Endothelial cell of umbilical vein (primary cell): ENCODE measurements at regions of chr2 and their contacts with region 1.

Region 1: GRCh38 chr2:134118279-134119116 is 135.4 kb upstream of the MGAT5 start:
- DNase-seq: peak; percentile 92
- H3K4me3 ChIP-seq: no peak overlapping the region
- H3K27ac ChIP-seq: peak overlapping the region; percentile 43
- H3K4me1 ChIP-seq: peaks cover 25% of the 10 kb centered on the region
- H3K27me3 ChIP-seq: peaks cover 0 to 3% of the 10 kb centered on the region in 2 experiments
- CTCF ChIP-seq: peak; percentile 64 to 69
- POLR2A ChIP-seq: no peak

Region 2: DNA sequence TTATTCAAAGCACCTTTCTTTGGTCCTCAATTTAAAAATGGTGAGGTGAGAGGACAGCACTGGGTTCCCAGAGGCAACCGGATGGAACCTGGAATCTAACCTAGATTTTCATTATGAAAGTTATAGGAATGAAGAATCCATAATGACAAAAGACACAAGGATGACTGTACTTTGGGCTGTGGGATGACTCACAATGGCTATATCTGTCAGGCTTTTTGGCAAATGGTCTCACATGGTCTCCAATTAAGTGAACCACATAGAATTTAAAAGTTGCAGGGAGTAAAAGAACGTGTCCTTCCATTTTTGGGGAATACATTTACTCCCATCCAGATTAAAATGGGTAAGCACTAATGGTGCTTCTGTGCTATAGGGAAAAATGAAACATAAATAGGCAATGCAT is 1416.7 kb before region 1 on chr2:
- CTCF ChIA-PET with region 1: no interaction called
- POLR2A ChIA-PET with region 1: no interaction called
- dilution Hi-C with region 1: no loop called
- intact Hi-C with region 1: no loop called
- DNase-seq: no peak
- H3K4me3 ChIP-seq: no peak overlapping the region
- H3K27ac ChIP-seq: no peak overlapping the region
- H3K4me1 ChIP-seq: no peaks in the 10 kb centered on the region
- H3K27me3 ChIP-seq: no peaks in the 10 kb centered on the region
- CTCF ChIP-seq: no peak
- POLR2A ChIP-seq: no peak

Region 3: DNA sequence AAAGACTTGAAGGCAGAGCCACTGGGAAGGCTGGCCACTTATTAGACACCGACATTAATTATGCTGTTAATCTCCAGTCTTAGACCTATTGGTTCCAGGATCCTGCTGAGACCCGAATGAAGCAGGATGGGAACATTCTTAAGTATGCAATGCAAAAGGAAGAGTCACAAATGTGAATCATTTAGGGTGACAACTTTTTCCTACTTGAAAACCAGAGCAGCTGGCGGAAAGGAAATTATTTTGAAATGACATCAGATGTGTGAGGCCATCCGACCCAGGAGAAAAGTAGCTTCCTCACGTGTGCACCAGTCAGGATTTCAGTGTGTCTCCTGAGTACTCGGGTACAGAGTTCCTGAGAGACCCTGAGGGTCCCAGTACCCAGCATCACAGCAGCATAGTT is 327.3 kb before region 1 on chr2:
- CTCF ChIA-PET with region 1: no interaction called
- POLR2A ChIA-PET with region 1: no interaction called
- dilution Hi-C with region 1: no loop called
- intact Hi-C with region 1: no loop called
- DNase-seq: peak; percentile 46
- H3K4me3 ChIP-seq: no peak overlapping the region
- H3K27ac ChIP-seq: peak overlapping the region; percentile 62
- H3K4me1 ChIP-seq: peaks cover 13% of the 10 kb centered on the region
- H3K27me3 ChIP-seq: no peaks in the 10 kb centered on the region
- CTCF ChIP-seq: no peak
- POLR2A ChIP-seq: no peak

Region 4: GRCh38 chr2:134020608-134021007 is 97.9 kb before region 1 on chr2:
- CTCF ChIA-PET with region 1: no interaction called
- POLR2A ChIA-PET with region 1: no interaction called
- dilution Hi-C with region 1: no loop called
- intact Hi-C with region 1: no loop called
- DNase-seq: no peak
- H3K4me3 ChIP-seq: no peak overlapping the region
- H3K27ac ChIP-seq: no peak overlapping the region
- H3K4me1 ChIP-seq: no peaks in the 10 kb centered on the region
- H3K27me3 ChIP-seq: peaks cover 0 to 1% of the 10 kb centered on the region in 2 experiments
- CTCF ChIP-seq: no peak
- POLR2A ChIP-seq: no peak

Region 5: DNA sequence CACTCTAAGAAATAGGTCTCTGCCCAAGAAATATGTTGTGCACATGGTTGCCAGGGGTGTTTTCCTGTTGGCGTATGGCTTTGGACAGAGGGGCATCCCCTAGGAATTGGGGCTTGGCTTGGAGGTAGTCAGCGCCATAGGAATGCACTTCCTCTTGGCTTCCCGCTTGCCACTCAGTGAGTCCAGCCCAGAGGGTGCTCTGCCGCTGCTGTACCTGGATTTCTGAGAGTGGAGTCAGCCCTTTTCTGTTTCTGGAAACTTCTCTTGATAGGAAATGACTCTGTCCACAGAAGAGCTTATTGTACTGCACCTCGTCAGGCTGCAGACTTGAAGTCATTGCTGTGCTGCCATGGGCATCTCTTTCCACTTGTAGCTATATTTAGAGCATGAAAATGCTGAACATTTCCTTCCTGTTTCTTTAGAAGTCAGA is 18.7 kb after region 1 on chr2:
- CTCF ChIA-PET with region 1: interaction called, 12 read pairs
- POLR2A ChIA-PET with region 1: interaction called, 6 read pairs
- dilution Hi-C with region 1: no loop called
- intact Hi-C with region 1: loop called (anchors 1 kb)
- DNase-seq: peak; percentile 84
- H3K4me3 ChIP-seq: peak overlapping the region in 1 of 3 experiments; percentile 34
- H3K27ac ChIP-seq: peak overlapping the region; percentile 85
- H3K4me1 ChIP-seq: peaks cover 26% of the 10 kb centered on the region
- H3K27me3 ChIP-seq: no peaks in the 10 kb centered on the region
- CTCF ChIP-seq: no peak
- POLR2A ChIP-seq: no peak

Region 6: DNA sequence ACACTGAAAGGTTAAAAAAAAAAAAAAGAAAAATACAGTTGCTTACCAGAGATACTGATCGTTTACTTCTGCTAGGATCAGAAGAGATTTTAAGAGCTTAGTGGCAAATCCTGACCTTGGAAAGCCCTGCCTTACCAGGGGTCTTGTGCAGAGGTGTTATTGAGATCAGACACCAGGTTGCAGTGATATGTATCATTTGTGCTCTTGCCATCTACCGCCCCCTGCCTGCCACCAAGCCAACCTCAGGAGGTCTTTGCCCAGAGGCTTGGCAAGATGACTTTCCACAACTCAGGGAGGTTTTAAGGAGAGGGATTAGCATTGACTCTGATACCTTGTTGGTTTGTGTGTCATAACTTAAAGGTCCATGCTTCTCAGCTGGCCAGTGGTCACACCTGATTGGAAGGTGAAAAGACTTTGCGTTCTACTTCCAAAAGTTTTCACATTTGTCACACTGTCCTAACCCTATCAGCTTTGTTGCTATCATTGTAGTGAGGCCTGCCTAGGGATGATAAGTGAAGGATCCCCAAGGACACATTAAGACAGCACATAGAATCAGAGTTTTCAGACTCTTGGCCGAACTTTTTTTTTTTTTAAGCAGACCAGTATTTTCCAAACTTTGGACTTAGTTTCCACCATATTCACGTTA is 89.2 kb after region 1 on chr2:
- CTCF ChIA-PET with region 1: interaction called, 210 read pairs
- POLR2A ChIA-PET with region 1: interaction called, 3 read pairs
- dilution Hi-C with region 1: no loop called
- intact Hi-C with region 1: loop called (anchors 5 kb)
- DNase-seq: peak; percentile 69
- H3K4me3 ChIP-seq: no peak overlapping the region
- H3K27ac ChIP-seq: no peak overlapping the region
- H3K4me1 ChIP-seq: peaks cover 5% of the 10 kb centered on the region
- H3K27me3 ChIP-seq: no peaks in the 10 kb centered on the region
- CTCF ChIP-seq: peak; percentile 75 to 85
- POLR2A ChIP-seq: no peak

Region 7: GRCh38 chr2:134301099-134301927 is 182.8 kb after region 1 on chr2:
- CTCF ChIA-PET with region 1: interaction called, 10 read pairs
- POLR2A ChIA-PET with region 1: no interaction called
- dilution Hi-C with region 1: no loop called
- intact Hi-C with region 1: no loop called
- DNase-seq: peak; percentile 81
- H3K4me3 ChIP-seq: peak overlapping the region in 1 of 3 experiments; percentile 16
- H3K27ac ChIP-seq: peak overlapping the region; percentile 78
- H3K4me1 ChIP-seq: peaks cover 47% of the 10 kb centered on the region
- H3K27me3 ChIP-seq: no peaks in the 10 kb centered on the region
- CTCF ChIP-seq: no peak
- POLR2A ChIP-seq: no peak

Region 8: GRCh38 chr2:134402410-134402809 is 283.9 kb after region 1 on chr2:
- CTCF ChIA-PET with region 1: interaction called, 18 read pairs
- POLR2A ChIA-PET with region 1: interaction called, 3 read pairs
- dilution Hi-C with region 1: no loop called
- intact Hi-C with region 1: no loop called
- DNase-seq: peak; percentile 21
- H3K4me3 ChIP-seq: no peak overlapping the region
- H3K27ac ChIP-seq: no peak overlapping the region
- H3K4me1 ChIP-seq: peaks cover 60% of the 10 kb centered on the region
- H3K27me3 ChIP-seq: no peaks in the 10 kb centered on the region
- CTCF ChIP-seq: no peak
- POLR2A ChIP-seq: no peak

Region 9: GRCh38 chr2:134897932-134898331 is 779.4 kb after region 1 on chr2:
- CTCF ChIA-PET with region 1: no interaction called
- POLR2A ChIA-PET with region 1: no interaction called
- dilution Hi-C with region 1: no loop called
- intact Hi-C with region 1: loop called (anchors 10 kb)
- DNase-seq: peak; percentile 20
- H3K4me3 ChIP-seq: no peak overlapping the region
- H3K27ac ChIP-seq: no peak overlapping the region
- H3K4me1 ChIP-seq: no peaks in the 10 kb centered on the region
- H3K27me3 ChIP-seq: no peaks in the 10 kb centered on the region
- CTCF ChIP-seq: peak in 1 of 2 donors; percentile 6
- POLR2A ChIP-seq: no peak